Activated T-helper 1 cell treated with anti-CD3 and anti-CD28 coated beads, Interleukin-12 subunit alpha, Interleukin-12 subunit beta, Interleukin-2, Interleukin-4 antibody, amounts not matched to agents 30 ng/mL and 10 ng/mL and 1 ng/mL, durations not matched to agents 14 hours and 24 hours and 36 hours (primary cell): ENCODE measurements at regions of chr19 and their contacts with region 1.

Region 1: DNA sequence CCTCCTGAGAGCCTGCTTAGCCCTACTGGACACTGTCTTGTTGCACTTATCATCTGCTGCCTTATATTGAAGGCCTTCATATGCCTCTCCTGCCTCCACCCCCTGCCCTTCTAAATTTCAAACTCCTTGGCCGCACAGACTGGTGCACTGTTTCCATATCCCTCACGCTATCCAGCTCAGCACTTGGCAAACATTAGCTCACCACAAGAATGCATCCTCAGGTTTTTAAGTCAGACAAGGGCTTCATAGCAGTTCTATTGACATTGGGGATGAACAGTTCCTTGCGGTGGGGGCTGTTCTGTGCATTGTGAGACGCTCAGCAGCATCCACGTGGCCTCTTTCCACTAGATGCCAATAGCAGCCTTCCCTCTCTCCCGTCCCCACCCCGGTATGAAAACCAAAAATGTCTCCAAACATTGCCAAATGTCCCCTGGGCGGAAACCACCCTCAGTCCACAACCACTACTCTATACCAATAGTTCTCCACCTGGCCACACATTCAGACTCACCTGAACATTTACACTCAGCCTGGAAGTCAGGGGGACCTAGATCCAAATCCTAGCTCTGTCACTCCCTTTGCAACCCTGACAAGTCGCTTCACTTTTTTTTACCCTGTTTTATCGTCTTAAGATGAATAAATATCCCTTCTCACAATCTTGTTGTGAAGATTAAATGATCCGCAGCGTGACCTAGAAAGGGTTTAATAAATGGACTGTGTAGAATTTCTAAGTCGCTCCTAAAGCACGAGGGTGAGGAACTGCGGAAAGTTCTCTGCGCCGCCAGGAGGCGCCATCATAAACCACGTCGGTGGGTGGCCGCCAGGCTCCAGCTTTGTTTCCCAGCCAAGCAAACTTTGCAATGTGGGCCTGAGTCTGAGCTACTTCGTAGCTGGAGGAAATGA is 3.6 kb upstream of the CEACAM3 start:
- DNase-seq: peak; percentile 45
- H3K4me3 Mint-ChIP-seq: no peak overlapping the region
- H3K27ac Mint-ChIP-seq: no peak overlapping the region
- H3K4me1 Mint-ChIP-seq: peaks cover 14% of the 10 kb centered on the region
- H3K27me3 Mint-ChIP-seq: peaks cover 51% of the 10 kb centered on the region

Region 2: DNA sequence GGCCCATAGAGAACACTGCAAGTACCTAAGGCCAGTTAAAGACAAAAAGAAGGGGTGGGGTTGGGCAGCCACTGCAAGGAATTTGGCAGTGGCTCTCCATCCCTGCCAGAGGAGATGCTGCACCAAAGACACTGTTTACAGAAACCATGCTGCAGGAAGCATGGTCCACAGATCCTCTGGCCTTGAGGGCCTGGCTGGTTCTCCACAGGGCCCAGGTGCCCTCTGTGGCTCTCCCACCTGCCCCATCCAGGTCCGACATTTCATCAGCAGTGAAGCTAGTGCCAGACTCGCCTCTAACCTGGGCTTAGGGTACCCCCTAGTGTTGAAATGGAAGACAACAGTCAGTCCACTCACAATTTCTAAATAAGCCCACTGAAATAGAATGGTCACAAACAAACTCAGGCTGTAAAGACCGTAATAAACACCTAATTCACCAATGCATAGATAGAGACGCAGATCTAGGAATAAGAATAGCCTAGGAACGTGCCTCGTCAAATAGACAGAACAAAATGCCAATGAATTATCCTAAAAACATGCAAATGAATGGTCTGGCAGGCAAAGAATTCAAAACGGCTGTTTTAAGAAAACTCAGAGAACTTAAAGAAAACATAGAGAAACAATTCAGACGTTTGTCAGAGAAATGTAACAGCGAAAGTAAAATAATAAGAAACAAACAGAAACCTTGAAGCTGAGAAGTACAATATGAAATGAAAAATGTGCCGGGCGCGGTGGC is 28.4 kb after region 1 on chr19:
- intact Hi-C with region 1: loop called (anchors 1 kb)
- DNase-seq: peak; percentile 53
- H3K4me3 Mint-ChIP-seq: no peak overlapping the region
- H3K27ac Mint-ChIP-seq: no peak overlapping the region
- H3K4me1 Mint-ChIP-seq: peaks cover 4% of the 10 kb centered on the region
- H3K27me3 Mint-ChIP-seq: peaks cover 38% of the 10 kb centered on the region

Region 3: GRCh38 chr19:41837981-41838708 is 45.4 kb after region 1 on chr19:
- intact Hi-C with region 1: loop called (anchors 5 kb)
- DNase-seq: no peak
- H3K4me3 Mint-ChIP-seq: no peak overlapping the region
- H3K27ac Mint-ChIP-seq: no peak overlapping the region
- H3K4me1 Mint-ChIP-seq: no peaks in the 10 kb centered on the region
- H3K27me3 Mint-ChIP-seq: peaks cover 22% of the 10 kb centered on the region